H1 (cell line): ENCODE measurements at regions of chr5 and their contacts with region 1.

Region 1: DNA sequence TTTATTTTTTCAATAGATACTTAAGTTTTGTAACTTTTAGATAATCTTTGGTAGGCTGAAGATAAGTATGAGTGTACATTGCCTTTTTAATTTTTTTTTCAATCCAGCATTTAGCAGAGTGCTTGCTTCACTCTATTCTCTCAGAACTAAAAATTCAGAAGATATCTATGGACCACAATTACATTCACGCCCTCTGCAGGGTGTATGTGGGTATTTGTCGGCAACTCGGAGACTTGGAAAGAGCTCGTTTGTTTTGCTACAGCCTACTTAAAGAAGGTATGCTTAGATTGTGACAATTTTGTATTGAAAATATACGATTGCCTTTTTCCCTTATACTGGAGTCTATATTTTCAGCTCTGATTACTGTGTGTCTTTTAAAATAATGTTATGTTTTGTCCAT is 43.8 kb downstream of the ICE1 start:
- DNase-seq: no peak
- H3K4me3 ChIP-seq: no peak overlapping the region
- H3K27ac ChIP-seq: no peak overlapping the region
- H3K4me1 ChIP-seq: no peaks in the 10 kb centered on the region
- H3K27me3 ChIP-seq: no peaks in the 10 kb centered on the region
- CTCF ChIP-seq: peak in 1 of 3 experiments; percentile 5; a peak in 1 of 4 replicates
- EP300 ChIP-seq: no peak
- POLR2A ChIP-seq: no peak
- RAD21 ChIP-seq: peak in 1 of 2 experiments; percentile 8; a peak in 1 of 4 replicates

Region 2: DNA sequence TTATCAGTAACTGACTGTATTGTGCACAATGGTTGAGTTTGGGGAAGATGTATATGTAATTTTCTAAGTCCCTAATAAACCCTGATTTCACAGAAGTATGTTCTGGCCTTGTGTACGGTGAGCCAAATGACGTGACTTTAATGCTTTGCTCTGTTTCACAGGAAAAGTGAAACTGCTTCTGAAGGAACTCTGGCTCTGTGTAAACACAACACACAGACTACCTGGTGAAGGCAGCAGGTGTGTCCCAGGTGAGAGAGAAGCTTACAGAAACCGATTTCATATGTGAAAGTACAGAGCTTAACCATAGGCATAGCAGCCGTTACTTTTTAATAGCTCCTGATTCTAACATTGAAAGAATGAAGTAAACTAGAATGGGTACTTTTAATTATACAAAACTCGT is 11.8 kb before region 1 on chr5:
- CTCF ChIA-PET with region 1: interaction called, 13 read pairs
- POLR2A ChIA-PET with region 1: interaction called, 4 read pairs
- DNase-seq: no peak
- H3K4me3 ChIP-seq: no peak overlapping the region
- H3K27ac ChIP-seq: no peak overlapping the region
- H3K4me1 ChIP-seq: no peaks in the 10 kb centered on the region
- H3K27me3 ChIP-seq: no peaks in the 10 kb centered on the region
- CTCF ChIP-seq: no peak
- EP300 ChIP-seq: no peak
- POLR2A ChIP-seq: no peak
- RAD21 ChIP-seq: no peak